ENCODE measurements at regions of chr15 and their contacts with region 1.

Region 1: DNA sequence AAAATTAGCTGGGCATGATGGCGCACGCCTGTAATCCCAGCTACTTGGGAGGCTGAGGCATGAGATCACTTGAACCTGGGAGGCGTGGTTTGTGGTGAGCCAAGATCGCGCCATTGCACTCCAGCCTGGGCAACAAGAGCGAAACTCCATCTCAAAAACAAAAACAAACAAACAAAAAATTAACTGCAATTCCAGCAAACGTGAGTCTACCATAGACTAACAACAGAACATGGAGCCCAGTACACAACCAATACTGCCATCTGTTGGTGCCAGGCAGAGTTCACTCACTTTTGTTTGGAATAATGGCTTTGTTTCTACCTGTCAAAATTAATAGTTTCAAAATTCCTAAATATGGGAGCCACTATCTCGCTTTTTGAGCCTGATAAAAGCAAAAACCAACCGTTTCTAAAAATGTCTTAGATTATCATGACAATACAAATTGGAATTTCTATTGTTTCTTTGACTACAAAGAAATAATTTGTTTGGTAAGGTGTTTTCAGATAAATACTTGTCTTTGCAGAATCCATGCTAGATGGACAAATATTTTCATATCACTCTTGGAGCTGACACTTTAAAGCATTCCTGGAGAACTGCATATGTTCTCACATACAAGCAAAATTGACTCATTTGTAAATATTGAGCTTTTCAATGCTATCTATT is 45.0 kb downstream of the GPR176 start:
- DNase-seq: no peak
- ATAC-seq: peak; percentile 63
- H3K4me3 ChIP-seq: no peak overlapping the region
- H3K27ac ChIP-seq: no peak overlapping the region
- H3K4me1 ChIP-seq: no peaks in the 10 kb centered on the region; the same call in 1 of the 2 replicates
- H3K27me3 ChIP-seq: no peaks in the 10 kb centered on the region
- CTCF ChIP-seq: peak; percentile 61 to 65 (median 65)
- EP300 ChIP-seq: no peak
- POLR2A ChIP-seq: no peak
- RAD21 ChIP-seq: peak; percentile 83

Region 2: GRCh38 chr15:39686000-39686613 is 188.9 kb before region 1 on chr15:
- CTCF ChIA-PET with region 1: interaction called, 19 read pairs
- POLR2A ChIA-PET with region 1: no interaction called
- RAD21 ChIA-PET with region 1: interaction called, 9 read pairs
- SMC1A ChIA-PET with region 1: interaction called, 8 read pairs
- in situ Hi-C with region 1: no loop called
- intact Hi-C with region 1: loop called (anchors 5 kb)
- DNase-seq: no peak
- ATAC-seq: peak; percentile 84
- H3K4me3 ChIP-seq: no peak overlapping the region
- H3K27ac ChIP-seq: no peak overlapping the region
- H3K4me1 ChIP-seq: no peaks in the 10 kb centered on the region
- H3K27me3 ChIP-seq: no peaks in the 10 kb centered on the region; a peak in 1 of 4 replicates
- CTCF ChIP-seq: peak; percentile 61 to 78 (median 65)
- EP300 ChIP-seq: no peak
- POLR2A ChIP-seq: no peak
- RAD21 ChIP-seq: peak; percentile 79

Region 3: GRCh38 chr15:39782441-39783138 is 92.4 kb before region 1 on chr15 and contains the start of gene FSIP1:
- CTCF ChIA-PET with region 1: interaction called, 81 read pairs
- POLR2A ChIA-PET with region 1: interaction called, 7 read pairs
- RAD21 ChIA-PET with region 1: interaction called, 52 read pairs
- SMC1A ChIA-PET with region 1: interaction called, 80 read pairs
- in situ Hi-C with region 1: loop called (anchors 5 kb)
- intact Hi-C with region 1: loop called (anchors 1 kb)
- DNase-seq: peak; percentile 86
- ATAC-seq: peak; percentile 98
- H3K4me3 ChIP-seq: peak within 1 kb of the TSS; percentile 97
- H3K27ac ChIP-seq: peak within 1 kb of the TSS; percentile 93
- H3K4me1 ChIP-seq: peaks cover 7% of the 10 kb centered on the region
- H3K27me3 ChIP-seq: no peaks in the 10 kb centered on the region
- CTCF ChIP-seq: no peak
- EP300 ChIP-seq: peak in 1 of 2 experiments; percentile 27; a peak in 1 of 4 replicates
- POLR2A ChIP-seq: peak; percentile 93
- RAD21 ChIP-seq: no peak
- polyA plus RNA-seq, gene FSIP1: 0.15 to 0.27 TPM

Region 4: DNA sequence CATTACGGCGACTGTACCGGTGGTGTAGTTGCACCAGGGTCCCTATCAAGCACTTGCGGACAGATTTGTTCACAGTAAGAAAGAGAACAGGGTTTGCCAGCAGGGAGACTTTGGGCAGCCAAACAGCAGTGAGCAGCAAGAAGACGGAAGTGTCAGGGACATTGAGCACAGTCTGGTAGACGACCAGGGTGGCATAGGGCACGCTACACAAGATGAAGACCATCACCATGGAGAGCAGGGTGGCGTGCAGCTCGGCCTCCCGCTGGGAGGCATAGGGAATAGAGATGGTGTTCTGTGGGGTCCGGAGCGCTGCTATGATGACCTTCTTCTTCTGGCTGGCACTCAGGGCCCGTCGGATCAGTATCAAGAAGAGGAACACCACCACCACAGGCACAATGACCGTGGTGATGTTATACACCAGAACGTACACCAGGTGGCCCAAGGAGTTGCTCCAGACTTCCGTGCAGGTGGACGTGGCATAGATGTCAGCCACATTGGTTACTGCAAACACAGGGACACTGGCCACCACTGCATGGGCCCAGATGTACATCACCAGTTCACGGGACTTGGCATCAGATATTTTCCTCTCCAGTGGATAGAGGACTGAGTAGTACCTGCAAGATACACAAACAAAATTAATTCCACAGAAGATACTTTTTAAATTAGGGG is 73.2 kb before region 1 on chr15:
- CTCF ChIA-PET with region 1: interaction called, 50 read pairs
- POLR2A ChIA-PET with region 1: interaction called, 4 read pairs
- RAD21 ChIA-PET with region 1: interaction called, 10 read pairs
- SMC1A ChIA-PET with region 1: interaction called, 29 read pairs
- in situ Hi-C with region 1: no loop called
- intact Hi-C with region 1: loop called (anchors 1 kb)
- DNase-seq: no peak
- ATAC-seq: peak; percentile 96
- H3K4me3 ChIP-seq: no peak overlapping the region
- H3K27ac ChIP-seq: no peak overlapping the region
- H3K4me1 ChIP-seq: peaks cover 5% of the 10 kb centered on the region; the same call in 1 of the 2 replicates
- H3K27me3 ChIP-seq: no peaks in the 10 kb centered on the region; a peak in 1 of 4 replicates
- CTCF ChIP-seq: peak; percentile 63 to 67 (median 65); a peak in 5 of 6 replicates
- EP300 ChIP-seq: no peak
- POLR2A ChIP-seq: no peak
- RAD21 ChIP-seq: peak; percentile 67

Region 5: DNA sequence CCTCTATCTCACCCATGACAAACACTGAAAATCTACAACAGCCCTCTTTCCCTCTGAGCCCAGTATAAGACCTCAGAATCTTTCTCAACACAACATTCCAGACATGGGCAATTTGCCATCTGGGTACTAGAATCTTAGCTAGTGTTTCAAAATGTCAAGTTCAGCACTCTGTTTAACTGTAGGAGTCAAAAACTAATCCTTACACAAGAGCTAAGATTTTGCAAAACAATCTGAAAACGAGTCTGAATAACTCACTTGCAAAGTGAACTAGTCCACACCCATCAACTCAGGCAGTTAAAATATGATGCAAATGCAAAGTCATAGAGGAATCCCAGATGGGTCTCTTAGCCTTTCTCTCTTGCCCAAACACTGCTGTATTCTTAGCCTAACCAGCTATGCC is 22.8 kb before region 1 on chr15:
- CTCF ChIA-PET with region 1: interaction called, 24 read pairs
- POLR2A ChIA-PET with region 1: no interaction called
- RAD21 ChIA-PET with region 1: interaction called, 3 read pairs
- SMC1A ChIA-PET with region 1: interaction called, 5 read pairs
- in situ Hi-C with region 1: no loop called
- intact Hi-C with region 1: no loop called
- DNase-seq: no peak
- ATAC-seq: no peak
- H3K4me3 ChIP-seq: no peak overlapping the region
- H3K27ac ChIP-seq: no peak overlapping the region
- H3K4me1 ChIP-seq: no peaks in the 10 kb centered on the region
- H3K27me3 ChIP-seq: peaks cover 0 to 5% of the 10 kb centered on the region in 2 experiments; a peak in 2 of 4 replicates
- CTCF ChIP-seq: no peak
- EP300 ChIP-seq: no peak
- POLR2A ChIP-seq: no peak
- RAD21 ChIP-seq: no peak

Region 6: GRCh38 chr15:39860200-39860599 is 14.8 kb before region 1 on chr15:
- CTCF ChIA-PET with region 1: interaction called, 36 read pairs
- POLR2A ChIA-PET with region 1: interaction called, 5 read pairs
- RAD21 ChIA-PET with region 1: interaction called, 11 read pairs
- SMC1A ChIA-PET with region 1: interaction called, 37 read pairs
- in situ Hi-C with region 1: no loop called
- intact Hi-C with region 1: no loop called
- DNase-seq: no peak
- ATAC-seq: no peak
- H3K4me3 ChIP-seq: no peak overlapping the region
- H3K27ac ChIP-seq: no peak overlapping the region
- H3K4me1 ChIP-seq: no peaks in the 10 kb centered on the region
- H3K27me3 ChIP-seq: no peaks in the 10 kb centered on the region; a peak in 1 of 4 replicates
- CTCF ChIP-seq: no peak
- EP300 ChIP-seq: no peak
- POLR2A ChIP-seq: no peak
- RAD21 ChIP-seq: no peak

Region 7: DNA sequence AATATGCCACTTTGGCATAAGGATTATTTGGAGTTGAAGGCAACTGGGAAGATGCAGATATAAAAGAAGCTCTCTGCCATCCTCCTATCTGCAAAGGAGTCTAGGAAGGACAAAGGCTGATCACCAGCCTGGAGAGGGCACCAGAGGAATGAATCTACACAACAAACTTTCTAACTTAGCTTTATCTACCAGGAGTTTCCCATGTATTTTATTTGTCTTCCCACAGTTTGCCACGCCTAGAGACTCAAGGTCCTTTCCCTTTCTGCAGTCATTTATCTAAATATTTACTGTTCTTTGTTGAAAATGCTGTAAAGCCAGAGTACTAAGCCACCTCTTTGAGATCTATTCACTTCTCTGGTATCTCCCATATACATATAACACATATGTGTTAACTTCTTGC is 12.8 kb after region 1 on chr15:
- CTCF ChIA-PET with region 1: interaction called, 12 read pairs
- POLR2A ChIA-PET with region 1: no interaction called
- RAD21 ChIA-PET with region 1: interaction called, 5 read pairs
- SMC1A ChIA-PET with region 1: interaction called, 4 read pairs
- in situ Hi-C with region 1: no loop called
- intact Hi-C with region 1: no loop called
- DNase-seq: no peak
- ATAC-seq: peak; percentile 75
- H3K4me3 ChIP-seq: no peak overlapping the region
- H3K27ac ChIP-seq: no peak overlapping the region
- H3K4me1 ChIP-seq: no peaks in the 10 kb centered on the region
- H3K27me3 ChIP-seq: no peaks in the 10 kb centered on the region; a peak in 1 of 4 replicates
- CTCF ChIP-seq: peak; percentile 20 to 55 (median 35); a peak in 4 of 6 replicates
- EP300 ChIP-seq: no peak
- POLR2A ChIP-seq: no peak
- RAD21 ChIP-seq: peak; percentile 26; the same call in 1 of the 2 replicates

Region 8: DNA sequence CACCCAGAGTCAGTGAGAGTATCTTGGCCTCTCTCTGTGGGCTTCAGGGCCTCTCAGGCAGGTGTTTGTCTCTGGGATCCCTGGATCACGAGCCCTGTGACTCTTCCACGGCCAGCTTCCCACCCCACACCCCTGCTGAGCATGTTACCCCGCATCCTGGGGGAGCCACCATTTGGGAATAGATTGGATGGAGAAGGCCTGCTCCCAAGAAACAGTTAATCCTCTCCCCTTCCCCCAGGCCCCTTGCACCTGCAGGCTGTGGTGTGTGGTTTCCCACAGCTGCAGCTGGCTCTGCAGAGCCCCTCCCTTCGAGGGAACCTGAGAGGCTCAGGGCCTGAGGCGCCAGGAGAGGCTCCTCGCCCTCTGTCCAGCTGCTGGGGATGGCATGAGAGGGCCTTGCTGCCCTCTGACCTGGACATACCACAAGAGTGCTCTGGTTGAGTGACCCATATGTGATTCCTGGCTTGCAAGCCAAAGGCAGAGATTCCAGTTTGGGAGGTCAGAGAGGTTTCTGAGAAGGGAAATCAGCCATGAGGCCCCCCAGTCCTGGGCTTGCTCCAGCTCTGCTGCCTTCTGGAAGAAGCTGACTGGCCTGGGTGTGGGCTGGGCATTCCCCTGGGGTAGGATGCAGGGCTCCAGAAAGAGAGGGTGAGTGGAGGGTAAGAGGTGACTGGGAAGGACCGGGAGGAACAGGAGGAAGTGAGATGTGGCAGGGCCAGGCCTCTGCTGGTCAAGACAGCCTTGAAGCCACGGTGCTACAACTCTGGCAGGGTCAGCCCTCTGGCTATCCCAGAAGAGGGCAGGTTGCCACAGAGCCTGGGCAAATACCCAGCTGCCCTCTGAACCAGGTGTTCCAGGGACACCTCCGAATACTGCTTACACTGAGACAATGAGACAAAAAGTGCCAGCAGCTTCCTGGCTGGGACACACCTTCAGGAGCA is 179.9 kb after region 1 on chr15:
- CTCF ChIA-PET with region 1: no interaction called
- POLR2A ChIA-PET with region 1: no interaction called
- RAD21 ChIA-PET with region 1: no interaction called
- SMC1A ChIA-PET with region 1: no interaction called
- in situ Hi-C with region 1: no loop called
- intact Hi-C with region 1: no loop called
- DNase-seq: no peak
- ATAC-seq: peak; percentile 86
- H3K4me3 ChIP-seq: no peak overlapping the region
- H3K27ac ChIP-seq: peak overlapping the region; percentile 89
- H3K4me1 ChIP-seq: peaks cover 58% of the 10 kb centered on the region
- H3K27me3 ChIP-seq: no peaks in the 10 kb centered on the region
- CTCF ChIP-seq: no peak
- EP300 ChIP-seq: peak; percentile 72 to 83; a peak in 3 of 4 replicates
- POLR2A ChIP-seq: peak; percentile 60
- RAD21 ChIP-seq: 0 out of 2 replicates have a peak, but pooled peaks have one; percentile 18

Measured in GM12878 (cell line).